ENCODE measurements at regions of chr1 and their contacts with region 1.

Region 1: DNA sequence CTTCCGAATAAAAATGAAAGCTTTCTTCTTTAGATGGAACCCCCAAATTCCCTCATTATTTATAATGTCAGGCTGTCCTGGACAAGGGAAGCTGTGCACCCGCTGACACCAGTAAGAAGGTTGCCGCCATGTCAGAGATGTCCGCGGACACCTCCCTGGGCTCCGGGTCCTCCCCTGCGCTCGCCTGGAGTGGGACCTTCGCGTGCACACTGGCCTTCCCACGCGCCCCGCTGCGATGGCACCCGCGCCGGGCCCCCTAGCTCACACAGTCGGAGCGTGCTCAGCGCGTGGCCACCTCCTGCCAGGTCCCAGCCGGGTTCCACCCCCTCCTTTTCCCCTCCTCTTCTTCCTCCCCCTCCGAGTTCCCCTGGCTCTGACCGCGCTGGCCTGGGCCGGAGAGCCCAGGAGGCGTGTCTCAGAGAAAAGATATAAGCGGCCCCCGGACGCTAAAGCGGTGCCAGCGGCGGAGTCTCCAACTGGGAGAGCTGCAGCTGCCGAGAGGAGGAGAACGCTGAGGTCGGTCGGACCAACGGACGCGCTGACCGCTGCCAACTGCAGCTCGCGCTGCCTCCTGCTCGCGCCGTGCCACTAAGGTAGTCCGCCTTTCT is at the start of gene G0S2:
- DNase-seq: no peak
- H3K4me3 Mint-ChIP-seq: peak within 1 kb of the TSS; percentile 53
- H3K27ac Mint-ChIP-seq: no peak within 1 kb of the TSS
- H3K4me1 Mint-ChIP-seq: peaks cover 49% of the 10 kb centered on the region
- H3K27me3 Mint-ChIP-seq: peaks cover 54% of the 10 kb centered on the region
- total RNA-seq, gene G0S2: 0.56 to 0.64 TPM

Region 2: GRCh38 chr1:209659909-209660308 is 15.2 kb before region 1 on chr1:
- CTCF ChIA-PET with region 1: interaction called, 20 read pairs
- POLR2A ChIA-PET with region 1: no interaction called
- DNase-seq: no peak
- H3K4me3 Mint-ChIP-seq: no peak overlapping the region
- H3K27ac Mint-ChIP-seq: no peak overlapping the region
- H3K4me1 Mint-ChIP-seq: peaks cover 14% of the 10 kb centered on the region
- H3K27me3 Mint-ChIP-seq: no peaks in the 10 kb centered on the region

Region 3: GRCh38 chr1:209692745-209693504 is 17.9 kb after region 1 on chr1:
- CTCF ChIA-PET with region 1: interaction called, 10 read pairs
- POLR2A ChIA-PET with region 1: no interaction called
- DNase-seq: peak; percentile 80
- H3K4me3 Mint-ChIP-seq: no peak overlapping the region
- H3K27ac Mint-ChIP-seq: no peak overlapping the region
- H3K4me1 Mint-ChIP-seq: peaks cover 42% of the 10 kb centered on the region
- H3K27me3 Mint-ChIP-seq: no peaks in the 10 kb centered on the region